HAP-1 (cell line): ENCODE measurements at regions of chrX and their contacts with region 1.

Region 1: DNA sequence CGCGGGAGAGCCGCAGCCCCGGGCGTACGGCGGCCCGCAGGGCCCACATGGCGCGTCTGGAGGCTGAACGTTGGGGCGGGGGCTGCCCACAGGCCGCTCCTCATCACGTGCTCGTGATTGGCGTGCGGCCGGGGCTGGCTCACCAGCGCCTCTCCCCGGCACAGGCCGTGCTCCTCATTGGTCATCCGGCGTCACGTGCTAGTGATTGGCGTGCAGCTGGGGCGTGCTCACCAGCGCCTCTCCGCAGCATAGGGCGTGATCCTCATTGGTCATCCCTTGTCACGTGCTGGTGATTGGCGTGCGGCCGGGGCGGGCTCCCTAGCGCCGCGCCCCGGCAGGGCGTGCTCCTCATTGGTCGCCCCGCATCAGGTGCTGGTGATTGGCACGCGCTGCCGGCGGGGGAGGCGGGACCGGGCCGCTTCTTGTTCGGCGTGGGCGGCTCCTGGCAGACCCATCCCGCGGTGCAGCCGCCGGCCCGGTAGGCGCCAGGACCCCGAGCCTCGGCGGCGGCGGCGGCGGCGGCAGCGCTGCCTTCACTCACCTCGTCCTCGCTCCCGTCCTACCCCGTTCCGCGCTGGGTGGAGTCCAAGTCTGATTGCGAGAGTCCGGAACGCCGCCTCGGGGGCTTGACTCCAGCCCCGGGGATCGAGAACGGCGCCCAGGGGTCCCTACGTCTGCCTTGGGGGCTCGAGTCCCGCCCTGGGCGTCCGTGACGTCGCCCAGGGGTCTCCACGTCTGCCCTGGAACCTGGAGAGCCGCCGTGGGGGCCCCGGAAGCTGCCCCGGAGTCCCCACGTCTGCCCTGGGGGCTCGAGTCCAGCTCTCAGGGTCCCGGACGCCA is at the start of gene GTPBP6:
- DNase-seq: peak; percentile 98 to 99
- H3K4me3 ChIP-seq: peak within 1 kb of the TSS; percentile 94
- H3K4me1 ChIP-seq: no peaks in the 10 kb centered on the region
- H3K27me3 ChIP-seq: no peaks in the 10 kb centered on the region

Region 2: DNA sequence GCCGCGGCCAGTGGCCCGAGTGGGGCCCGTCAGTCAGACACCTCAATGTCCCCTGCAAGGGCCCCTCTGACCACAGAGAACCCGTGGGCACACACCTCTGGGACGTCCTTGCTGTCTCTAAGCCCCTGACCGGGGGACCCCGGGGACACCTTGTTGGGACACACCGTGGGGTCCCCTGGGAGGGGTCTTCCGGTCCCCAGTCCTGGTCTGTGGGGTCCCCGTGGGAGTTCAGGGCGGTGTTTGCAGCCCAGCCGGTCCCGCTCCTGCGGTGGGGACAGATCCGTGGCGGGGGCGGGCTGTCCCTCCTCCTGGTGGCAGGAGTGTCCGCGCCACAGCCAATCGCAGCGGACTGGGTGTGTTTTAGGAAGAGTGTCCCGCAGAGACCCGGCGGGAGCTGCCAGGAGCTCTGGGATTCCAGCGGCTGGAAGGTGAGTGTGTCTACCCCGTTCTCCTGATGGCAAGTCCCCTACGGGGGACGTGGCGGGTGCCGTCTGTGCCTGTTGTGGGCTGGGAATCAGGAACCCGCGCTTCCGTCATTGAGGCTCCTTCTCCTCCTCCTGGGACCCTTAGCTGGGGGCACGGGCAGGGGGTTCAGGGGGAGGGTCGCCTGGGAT is 42.9 kb before region 1 on chrX:
- in situ Hi-C with region 1: loop called (anchors 5 kb)
- DNase-seq: peak; percentile 84 to 90
- H3K4me3 ChIP-seq: peak overlapping the region; percentile 61
- H3K4me1 ChIP-seq: peaks cover 8% of the 10 kb centered on the region
- H3K27me3 ChIP-seq: no peaks in the 10 kb centered on the region